Tibial artery (tissue), 4 donors: ENCODE measurements at regions of chr10 and their contacts with region 1.

Region 1: GRCh38 chr10:95601116-95601719 is 40.0 kb upstream of the SORBS1 start:
- DNase-seq: peak; percentile 86 to 91
- H3K4me3 ChIP-seq: no peak overlapping the region
- H3K27ac ChIP-seq: peak overlapping the region; percentile 60 to 86
- H3K4me1 ChIP-seq: peaks cover 0 to 51% (median 20%) of the 10 kb centered on the region in 4 donors
- H3K27me3 ChIP-seq: no peaks in the 10 kb centered on the region
- CTCF ChIP-seq: peak; percentile 93

Region 2: GRCh38 chr10:95290461-95291364 is 310.5 kb before region 1 on chr10 and contains the start of gene PDLIM1:
- intact Hi-C with region 1: loop called (anchors 10 kb)
- DNase-seq: peak; percentile 70 to 88
- H3K4me3 ChIP-seq: peak within 1 kb of the TSS; percentile 89 to 98
- H3K27ac ChIP-seq: peak within 1 kb of the TSS; percentile 93 to 94
- H3K4me1 ChIP-seq: peaks cover 0 to 68% (median 38%) of the 10 kb centered on the region in 4 donors
- H3K27me3 ChIP-seq: no peaks in the 10 kb centered on the region
- CTCF ChIP-seq: peak; percentile 41 to 58

Region 3: DNA sequence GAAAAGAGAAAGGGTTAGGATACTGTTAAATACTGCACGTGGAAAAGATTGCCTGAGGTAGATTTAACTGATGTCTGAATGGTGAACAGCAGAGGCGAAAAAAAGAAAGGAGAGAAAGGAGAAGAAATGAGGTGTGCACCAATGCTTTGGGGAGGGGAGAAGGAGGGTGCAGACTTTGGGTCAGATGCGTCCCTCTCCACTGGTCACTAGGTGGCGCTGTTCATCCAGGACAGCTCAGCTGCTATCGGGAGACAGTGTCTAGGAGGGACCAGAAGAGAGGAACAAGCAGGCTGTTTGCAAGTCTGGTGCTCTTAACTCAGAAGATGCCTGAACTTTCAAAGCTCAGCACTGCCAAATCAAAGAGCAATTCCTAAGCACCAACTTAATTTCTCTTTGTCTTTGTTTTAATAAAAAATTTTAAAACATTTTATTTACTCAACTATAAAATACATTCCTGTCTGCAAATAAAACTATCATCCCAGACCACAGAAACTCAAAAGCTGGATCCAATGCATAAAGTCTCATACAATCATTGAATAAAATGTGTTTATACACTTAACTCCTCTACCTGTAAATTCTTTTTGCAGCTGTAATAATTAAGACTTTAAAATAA is 226.5 kb before region 1 on chr10:
- intact Hi-C with region 1: loop called (anchors 1 kb)
- DNase-seq: peak; percentile 53 to 88
- H3K4me3 ChIP-seq: no peak overlapping the region
- H3K27ac ChIP-seq: peak overlapping the region; percentile 77 to 91
- H3K4me1 ChIP-seq: peaks cover 0 to 69% (median 41%) of the 10 kb centered on the region in 4 donors
- H3K27me3 ChIP-seq: no peaks in the 10 kb centered on the region
- CTCF ChIP-seq: peak; percentile 88 to 94

Region 4: GRCh38 chr10:95430231-95430951 is 170.8 kb before region 1 on chr10:
- intact Hi-C with region 1: loop called (anchors 1 kb)
- DNase-seq: no peak
- H3K4me3 ChIP-seq: no peak overlapping the region
- H3K27ac ChIP-seq: peak overlapping the region; percentile 80 to 91
- H3K4me1 ChIP-seq: peaks cover 0 to 97% (median 78%) of the 10 kb centered on the region in 4 donors
- H3K27me3 ChIP-seq: no peaks in the 10 kb centered on the region
- CTCF ChIP-seq: peak; percentile 90 to 94